Prostate gland (tissue), 2 donors: ENCODE measurements at regions of chr4 and their contacts with region 1.

Region 1: GRCh38 chr4:118981839-118982381 is 93.3 kb downstream of the SYNPO2 start:
- DNase-seq: peak; percentile 65
- H3K4me3 ChIP-seq: no peak overlapping the region
- H3K27ac ChIP-seq: peak overlapping the region; percentile 27 to 39
- H3K4me1 ChIP-seq: no peaks in the 10 kb centered on the region
- H3K27me3 ChIP-seq: no peaks in the 10 kb centered on the region
- CTCF ChIP-seq: peak; percentile 46 to 87 (median 68)
- POLR2A ChIP-seq: no peak

Region 2: GRCh38 chr4:119080716-119081541 is 99.0 kb after region 1 on chr4:
- intact Hi-C with region 1: no loop called
- DNase-seq: no peak
- H3K4me3 ChIP-seq: no peak overlapping the region
- H3K27ac ChIP-seq: no peak overlapping the region
- H3K4me1 ChIP-seq: no peaks in the 10 kb centered on the region
- H3K27me3 ChIP-seq: no peaks in the 10 kb centered on the region
- CTCF ChIP-seq: no peak
- POLR2A ChIP-seq: no peak

Region 3: DNA sequence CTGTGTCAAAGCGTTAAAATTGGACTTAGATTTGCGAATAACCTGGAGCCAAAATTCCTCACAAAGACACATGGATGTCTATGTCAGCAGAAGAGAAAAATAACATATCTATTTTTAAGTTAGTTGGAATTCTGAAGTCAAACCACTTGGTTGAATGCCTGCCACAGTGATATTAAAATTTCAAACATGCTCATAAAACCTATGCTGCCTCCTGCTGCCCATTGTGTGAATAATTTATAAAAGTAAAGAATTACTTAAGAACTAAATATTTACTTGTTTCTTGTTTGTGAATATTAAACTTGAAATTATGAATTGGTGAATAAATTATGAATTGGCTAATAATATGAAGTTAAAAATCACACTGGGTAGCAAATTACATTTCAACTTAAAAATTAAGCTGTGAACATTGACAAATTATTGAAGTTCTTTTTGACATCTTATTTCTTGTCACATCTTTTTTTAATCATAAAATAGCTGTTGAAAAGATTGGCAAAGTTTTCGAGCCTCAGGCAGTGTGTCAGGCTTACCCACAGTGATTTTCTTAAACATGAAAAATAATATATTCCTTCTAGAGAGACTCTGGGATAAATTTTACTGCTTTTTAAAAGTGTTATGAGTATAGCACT is 304.6 kb after region 1 on chr4:
- intact Hi-C with region 1: loop called (anchors 5 kb)
- DNase-seq: peak; percentile 25
- H3K4me3 ChIP-seq: no peak overlapping the region
- H3K27ac ChIP-seq: no peak overlapping the region
- H3K4me1 ChIP-seq: no peaks in the 10 kb centered on the region
- H3K27me3 ChIP-seq: no peaks in the 10 kb centered on the region
- CTCF ChIP-seq: peak in 3 of 4 experiments; percentile 52 to 80 (median 68)
- POLR2A ChIP-seq: no peak

Region 4: GRCh38 chr4:119510395-119511149 is 528.7 kb after region 1 on chr4:
- intact Hi-C with region 1: loop called (anchors 10 kb)
- DNase-seq: no peak
- H3K4me3 ChIP-seq: no peak overlapping the region
- H3K27ac ChIP-seq: peak overlapping the region; percentile 52 to 55
- H3K4me1 ChIP-seq: no peaks in the 10 kb centered on the region
- H3K27me3 ChIP-seq: no peaks in the 10 kb centered on the region
- CTCF ChIP-seq: no peak
- POLR2A ChIP-seq: no peak